BJ (cell line): ENCODE measurements at regions of chr11 and their contacts with region 1.

Region 1: DNA sequence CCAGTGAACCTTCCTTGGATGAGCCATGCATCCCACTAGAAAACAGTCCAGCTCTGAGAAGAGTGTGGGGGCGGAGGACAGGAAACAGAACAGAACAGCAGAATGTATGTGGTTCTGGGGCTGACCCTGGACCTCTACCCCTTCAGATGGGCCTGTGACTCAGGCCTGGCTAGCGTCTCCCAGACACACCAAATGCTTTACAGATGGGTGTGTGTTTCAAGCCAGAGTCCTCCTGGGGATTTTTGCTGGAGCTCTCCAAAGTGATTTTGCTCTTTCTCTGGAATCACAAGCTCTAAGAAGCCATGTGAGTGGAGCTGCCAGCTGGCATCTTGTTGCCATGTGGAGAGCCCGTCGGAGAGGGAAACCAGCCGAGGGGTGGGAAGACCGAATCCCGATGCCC is 13.2 kb upstream of the C1QTNF4 start:
- DNase-seq: peak; percentile 83
- H3K4me3 ChIP-seq: no peak overlapping the region
- H3K27me3 ChIP-seq: no peaks in the 10 kb centered on the region
- CTCF ChIP-seq: no peak

Region 2: GRCh38 chr11:47565340-47566148 is 41.8 kb before region 1 on chr11 and contains the start of gene PTPMT1:
- CTCF ChIA-PET with region 1: no interaction called
- POLR2A ChIA-PET with region 1: interaction called, 10 read pairs
- DNase-seq: no peak
- H3K4me3 ChIP-seq: peak within 1 kb of the TSS; percentile 68
- H3K27me3 ChIP-seq: no peaks in the 10 kb centered on the region
- CTCF ChIP-seq: no peak
- polyA plus RNA-seq, gene PTPMT1: 61.9 and 69.4 TPM in 2 replicates

Region 3: DNA sequence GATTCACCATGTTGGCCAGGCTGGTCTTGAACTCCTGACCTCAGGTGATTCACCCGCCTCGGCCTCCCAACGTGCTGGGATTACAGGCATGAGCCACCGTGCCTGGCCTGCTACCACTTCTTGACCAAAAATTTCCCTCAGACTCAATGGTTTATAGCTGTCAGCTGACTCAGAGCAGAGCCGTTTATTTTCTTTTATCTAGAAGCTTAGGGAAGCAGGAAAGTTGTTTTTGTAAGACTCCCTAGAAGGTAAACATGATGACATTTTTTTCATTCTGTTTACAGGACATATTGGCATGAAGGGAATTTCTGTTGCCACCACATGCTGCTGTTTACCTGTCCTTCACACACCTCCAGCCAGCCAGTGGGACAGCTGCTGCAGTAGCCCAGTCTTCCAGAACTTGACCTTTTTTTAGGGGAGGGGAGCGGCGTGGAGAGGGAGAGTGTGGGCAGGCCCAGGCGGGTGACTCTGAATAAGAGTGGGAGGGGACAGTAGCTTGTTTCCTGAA is 316.9 kb after region 1 on chr11:
- CTCF ChIA-PET with region 1: no interaction called
- POLR2A ChIA-PET with region 1: no interaction called
- DNase-seq: peak; percentile 59
- H3K4me3 ChIP-seq: no peak overlapping the region
- H3K27me3 ChIP-seq: no peaks in the 10 kb centered on the region
- CTCF ChIP-seq: no peak